Brain microvascular endothelial cell (primary cell): ENCODE measurements at regions of chr17 and their contacts with region 1.

Region 1: GRCh38 chr17:64496786-64497564 is at the start of gene POLG2:
- DNase-seq: peak; percentile 87
- H3K4me3 ChIP-seq: peak within 1 kb of the TSS; percentile 83
- H3K27ac ChIP-seq: peak within 1 kb of the TSS; percentile 67
- H3K27me3 ChIP-seq: no peaks in the 10 kb centered on the region
- CTCF ChIP-seq: peak; percentile 70

Region 2: DNA sequence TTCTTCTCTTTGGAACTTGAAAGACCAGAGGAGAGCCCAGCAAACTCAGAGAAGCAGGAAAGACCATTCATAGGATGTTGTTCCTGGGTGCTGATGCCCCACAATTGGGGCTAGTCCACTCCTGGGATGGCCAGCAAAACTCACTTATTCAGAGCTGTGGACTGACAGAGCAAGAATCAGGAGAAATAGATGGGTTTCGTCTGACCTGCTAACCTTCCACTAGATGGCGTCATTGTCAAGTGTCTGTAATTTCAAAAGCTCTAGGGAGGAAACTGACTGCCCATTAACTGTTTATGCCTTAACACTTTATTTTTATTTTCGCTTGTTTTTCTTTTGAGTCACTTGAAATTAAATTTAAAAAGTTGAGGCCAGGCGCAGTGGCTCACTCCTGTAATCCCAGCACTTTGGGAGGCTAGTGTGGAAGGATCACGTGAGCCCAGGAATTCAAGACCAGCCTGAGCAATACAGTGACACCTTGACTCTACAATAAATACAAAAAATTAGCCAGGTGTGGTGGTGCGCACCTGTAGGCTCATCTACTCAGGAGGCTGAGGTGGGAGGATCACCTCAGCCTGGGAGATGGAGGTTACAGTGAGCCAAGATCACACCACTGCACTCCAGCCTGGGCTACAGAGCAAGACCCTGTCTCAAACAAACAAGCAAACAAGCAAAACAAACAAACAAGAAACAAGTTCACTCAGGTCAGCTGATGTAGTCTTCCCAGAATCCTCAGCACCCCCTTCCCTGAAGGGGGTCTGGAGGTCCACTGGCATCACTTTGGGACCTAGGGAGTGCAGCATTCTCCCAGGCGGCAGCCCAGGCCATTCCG is 76.6 kb before region 1 on chr17:
- in situ Hi-C with region 1: loop called (anchors 10 kb)
- DNase-seq: peak; percentile 59
- H3K4me3 ChIP-seq: no peak overlapping the region
- H3K27ac ChIP-seq: no peak overlapping the region
- H3K27me3 ChIP-seq: no peaks in the 10 kb centered on the region
- CTCF ChIP-seq: peak; percentile 76

Region 3: DNA sequence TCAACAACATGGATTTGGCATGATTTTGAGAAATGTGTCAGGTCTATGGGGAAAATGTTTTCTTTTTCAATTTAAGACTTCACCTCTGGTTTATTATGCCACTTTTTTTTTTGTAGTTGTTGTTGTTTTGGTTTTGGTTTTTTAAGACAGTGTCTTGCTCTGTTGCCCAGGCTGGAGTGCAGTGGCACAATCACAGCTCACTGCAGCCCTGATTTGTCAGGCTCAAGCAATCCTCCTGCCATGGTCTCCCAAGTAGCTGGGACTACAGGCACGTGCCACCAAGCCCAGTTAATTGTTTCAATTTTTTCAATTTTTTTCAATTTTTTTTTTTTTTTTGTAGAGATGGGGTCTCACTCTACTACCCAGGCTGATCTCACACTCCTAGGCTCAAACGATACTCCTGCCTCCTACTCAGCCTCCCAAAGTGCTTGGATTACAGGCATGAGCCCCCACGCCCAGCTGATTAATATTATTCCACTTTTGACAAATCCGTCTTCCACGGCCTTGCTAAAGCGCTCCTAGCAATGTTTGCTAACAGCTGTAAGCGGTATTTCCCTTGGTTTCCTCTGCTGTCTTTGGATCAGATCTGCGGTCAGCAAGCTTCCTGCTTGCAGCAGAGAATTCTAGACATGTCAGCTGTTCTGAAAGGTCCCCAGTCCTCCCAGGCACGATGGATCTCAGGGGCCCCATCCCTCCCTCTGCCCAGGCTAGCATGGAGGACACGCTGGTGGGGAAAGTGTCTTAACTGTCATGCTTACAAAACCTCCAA is 55.0 kb before region 1 on chr17:
- in situ Hi-C with region 1: no loop called
- DNase-seq: peak; percentile 71
- H3K4me3 ChIP-seq: no peak overlapping the region
- H3K27ac ChIP-seq: peak overlapping the region; percentile 5
- H3K27me3 ChIP-seq: no peaks in the 10 kb centered on the region
- CTCF ChIP-seq: no peak